ENCODE measurements at regions of chr17 and their contacts with region 1.

Region 1: GRCh38 chr17:49624896-49625295 is 49.2 kb downstream of the NXPH3 start:
- DNase-seq: no peak
- H3K4me3 Mint-ChIP-seq: no peak overlapping the region
- H3K27ac Mint-ChIP-seq: no peak overlapping the region
- H3K4me1 Mint-ChIP-seq: no peaks in the 10 kb centered on the region
- H3K27me3 Mint-ChIP-seq: no peaks in the 10 kb centered on the region
- CTCF ChIP-seq: no peak

Region 2: DNA sequence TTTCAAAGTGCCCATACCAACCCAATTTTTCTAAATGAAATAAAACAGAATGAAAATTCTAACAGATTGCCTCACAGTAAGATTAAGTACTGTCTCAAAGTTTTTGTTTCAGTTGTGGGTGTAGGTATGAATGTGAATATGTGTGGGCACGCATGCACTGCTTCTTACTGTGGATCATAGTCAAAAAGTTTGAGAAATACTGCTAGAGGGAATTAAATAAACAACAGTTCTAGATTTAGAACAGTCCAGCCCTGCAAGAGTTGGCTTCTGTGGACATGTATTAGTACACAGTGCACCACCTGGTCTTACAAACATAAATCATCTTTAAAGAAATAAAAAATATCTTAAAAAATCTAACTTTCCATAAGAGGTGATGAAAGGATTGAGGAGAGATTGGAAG is 271.3 kb before region 1 on chr17:
- CTCF ChIA-PET with region 1: no interaction called
- intact Hi-C with region 1: no loop called
- DNase-seq: no peak
- H3K4me3 Mint-ChIP-seq: no peak overlapping the region
- H3K27ac Mint-ChIP-seq: no peak overlapping the region
- H3K4me1 Mint-ChIP-seq: peaks cover 3% of the 10 kb centered on the region
- H3K27me3 Mint-ChIP-seq: no peaks in the 10 kb centered on the region
- CTCF ChIP-seq: no peak

Region 3: DNA sequence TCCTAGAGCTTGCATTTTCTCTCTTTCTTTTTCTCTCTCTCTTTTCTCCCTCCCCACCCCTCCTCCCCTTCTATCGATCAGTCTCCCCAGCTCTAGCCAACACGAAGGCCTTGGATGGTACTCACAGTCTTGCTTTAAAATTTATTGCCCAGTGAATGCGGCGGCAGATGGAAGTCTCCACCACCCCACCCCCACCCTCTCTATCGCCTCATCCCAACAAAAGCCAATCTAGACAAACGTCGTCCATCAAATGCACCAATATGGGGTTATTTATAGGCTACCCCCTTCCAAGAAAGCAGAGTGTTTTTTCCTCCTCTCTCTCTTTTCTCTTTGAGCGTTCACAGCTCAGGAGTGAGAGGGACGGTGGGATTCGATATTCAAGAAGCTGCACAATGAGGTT is 140.3 kb before region 1 on chr17:
- CTCF ChIA-PET with region 1: interaction called, 10 read pairs
- intact Hi-C with region 1: no loop called
- DNase-seq: no peak
- H3K4me3 Mint-ChIP-seq: no peak overlapping the region
- H3K27ac Mint-ChIP-seq: no peak overlapping the region
- H3K4me1 Mint-ChIP-seq: no peaks in the 10 kb centered on the region
- H3K27me3 Mint-ChIP-seq: peaks cover 100% of the 10 kb centered on the region
- CTCF ChIP-seq: no peak

Region 4: DNA sequence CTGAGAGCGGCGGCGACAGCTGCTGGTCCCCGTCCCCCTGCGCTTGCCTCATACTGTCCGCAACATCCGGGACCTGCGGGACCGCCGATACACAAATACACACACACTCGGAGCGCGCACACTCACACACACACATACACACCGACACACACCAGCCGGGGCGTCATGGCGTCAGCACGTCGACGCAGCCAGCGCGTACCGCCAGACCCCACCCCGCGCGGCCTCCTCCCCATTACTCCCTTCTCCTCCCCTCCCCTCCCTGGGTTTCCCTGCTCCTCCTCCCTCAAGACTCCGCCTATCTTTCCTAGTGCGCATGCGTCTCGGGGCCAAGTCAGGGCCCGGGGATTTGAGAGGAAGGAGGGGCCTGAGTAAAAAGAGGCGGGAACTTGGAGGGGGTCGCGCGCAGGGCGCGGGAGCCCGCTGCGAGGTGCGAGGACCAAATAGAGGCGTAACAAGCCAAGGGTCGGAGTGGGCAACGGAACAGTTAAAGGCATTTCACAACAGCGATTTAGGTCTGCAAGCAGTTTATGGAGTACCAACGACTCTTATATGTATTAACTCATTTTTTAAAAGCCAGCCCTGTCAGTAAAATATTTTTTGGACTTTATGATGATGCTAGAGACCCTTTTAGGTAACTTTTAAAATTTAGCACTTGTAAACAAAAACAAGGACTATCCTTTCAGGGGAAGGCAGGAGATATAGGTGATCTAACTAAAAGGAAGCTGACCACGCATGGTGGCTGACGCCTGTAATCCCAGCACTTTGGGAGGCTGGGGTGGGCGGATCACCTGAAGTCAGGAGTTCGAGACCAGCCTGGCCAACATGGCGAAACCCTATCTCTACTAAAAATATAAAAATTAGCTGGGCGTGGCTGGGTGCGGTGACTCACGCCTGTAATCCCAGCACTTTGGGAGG is 53.3 kb after region 1 on chr17 and contains the start of gene SPOP:
- CTCF ChIA-PET with region 1: no interaction called
- intact Hi-C with region 1: loop called (anchors 10 kb)
- DNase-seq: peak; percentile 100
- H3K4me3 Mint-ChIP-seq: peak within 1 kb of the TSS; percentile 78
- H3K27ac Mint-ChIP-seq: peak within 1 kb of the TSS; percentile 82
- H3K4me1 Mint-ChIP-seq: peaks cover 26% of the 10 kb centered on the region
- H3K27me3 Mint-ChIP-seq: peaks cover 16% of the 10 kb centered on the region
- CTCF ChIP-seq: no peak
- total RNA-seq, gene SPOP: 79.0 and 79.9 TPM in 2 replicates

Region 5: DNA sequence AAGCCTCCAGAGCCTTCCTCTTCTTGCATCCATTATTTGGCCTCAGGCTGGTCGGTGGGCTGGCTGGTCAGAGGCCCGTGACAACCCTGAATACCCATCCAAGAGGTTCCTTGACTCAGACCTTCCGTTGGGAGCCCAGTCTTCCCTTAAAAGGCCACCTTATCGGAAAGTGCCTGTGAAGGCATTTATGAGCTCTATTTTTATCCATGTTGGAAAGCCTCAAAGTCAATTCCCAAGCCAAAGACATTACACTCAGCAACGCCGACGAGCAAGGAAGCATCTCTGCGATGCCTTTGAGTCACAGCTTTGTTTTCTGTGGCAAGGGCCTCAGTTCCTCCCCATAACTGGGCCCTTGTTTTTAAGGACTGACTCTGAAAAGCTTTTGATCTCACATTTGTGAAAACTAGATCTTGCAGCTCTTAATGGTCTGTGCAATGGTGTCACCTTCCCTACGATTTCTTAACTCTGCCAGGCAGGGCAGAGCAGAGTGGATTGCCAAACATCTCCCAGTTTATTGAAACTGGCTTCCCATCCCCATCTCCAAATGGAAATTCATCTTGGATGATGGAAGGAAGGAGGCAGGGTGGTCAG is 66.3 kb after region 1 on chr17:
- CTCF ChIA-PET with region 1: no interaction called
- intact Hi-C with region 1: no loop called
- DNase-seq: no peak
- H3K4me3 Mint-ChIP-seq: no peak overlapping the region
- H3K27ac Mint-ChIP-seq: no peak overlapping the region
- H3K4me1 Mint-ChIP-seq: peaks cover 26% of the 10 kb centered on the region
- H3K27me3 Mint-ChIP-seq: peaks cover 26% of the 10 kb centered on the region
- CTCF ChIP-seq: no peak

Measured in Calu3 (cell line).